MCF 10A (cell line): ENCODE measurements at regions of chr5 and their contacts with region 1.

Region 1: GRCh38 chr5:140351609-140352334 is 5.4 kb upstream of the HBEGF start:
- DNase-seq: peak; percentile 92
- H3K4me3 Mint-ChIP-seq: no peak overlapping the region
- H3K27ac Mint-ChIP-seq: no peak overlapping the region
- H3K4me1 Mint-ChIP-seq: peaks cover 28% of the 10 kb centered on the region
- H3K27me3 Mint-ChIP-seq: no peaks in the 10 kb centered on the region
- CTCF ChIP-seq: peak; percentile 95

Region 2: DNA sequence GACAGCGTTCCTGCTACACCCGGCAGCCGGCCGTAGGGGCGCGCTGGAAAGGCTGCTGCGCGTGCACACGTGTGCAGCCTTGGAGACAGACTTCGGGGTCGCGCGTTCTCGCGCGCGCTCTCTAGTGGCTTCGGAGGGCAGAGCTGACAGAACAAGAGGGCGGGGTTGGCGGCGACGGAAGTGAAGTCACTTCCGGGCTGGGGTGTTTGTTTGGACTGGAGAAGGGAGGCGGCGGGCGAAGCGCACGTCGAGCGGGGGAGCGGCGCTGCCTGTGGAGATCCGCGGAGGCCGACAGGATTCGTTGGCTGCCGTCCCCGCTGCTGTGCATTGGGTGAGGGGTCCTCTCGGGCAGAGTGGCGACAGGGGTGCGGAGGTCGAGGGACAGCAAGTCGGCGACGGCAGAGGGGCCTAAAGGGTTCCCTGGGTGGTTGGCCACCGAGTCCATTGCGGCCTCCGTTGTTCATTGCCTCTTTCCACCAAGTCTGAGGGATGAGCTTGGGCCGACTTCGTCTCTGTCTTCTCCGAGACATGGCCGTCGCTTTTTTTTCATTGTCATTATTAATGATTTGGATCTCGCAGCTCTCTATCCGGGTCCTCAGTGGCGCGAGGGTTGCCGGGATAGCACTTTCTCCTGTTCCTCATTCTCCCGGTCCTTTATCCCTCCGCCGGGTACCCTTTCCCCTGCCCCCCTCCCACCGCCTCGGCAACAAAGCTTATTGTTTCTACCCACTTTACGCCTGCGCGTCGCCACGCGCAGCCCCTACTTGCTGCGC is 1009.9 kb before region 1 on chr5 and contains the start of gene PAIP2:
- CTCF ChIA-PET with region 1: no interaction called
- POLR2A ChIA-PET with region 1: no interaction called
- intact Hi-C with region 1: no loop called
- DNase-seq: peak; percentile 99
- H3K4me3 Mint-ChIP-seq: peak within 1 kb of the TSS; percentile 97
- H3K27ac Mint-ChIP-seq: peak within 1 kb of the TSS; percentile 100
- H3K4me1 Mint-ChIP-seq: peaks cover 20% of the 10 kb centered on the region
- H3K27me3 Mint-ChIP-seq: no peaks in the 10 kb centered on the region
- CTCF ChIP-seq: peak; percentile 85
- total RNA-seq, gene PAIP2: 104 and 108 TPM in 2 replicates

Region 3: DNA sequence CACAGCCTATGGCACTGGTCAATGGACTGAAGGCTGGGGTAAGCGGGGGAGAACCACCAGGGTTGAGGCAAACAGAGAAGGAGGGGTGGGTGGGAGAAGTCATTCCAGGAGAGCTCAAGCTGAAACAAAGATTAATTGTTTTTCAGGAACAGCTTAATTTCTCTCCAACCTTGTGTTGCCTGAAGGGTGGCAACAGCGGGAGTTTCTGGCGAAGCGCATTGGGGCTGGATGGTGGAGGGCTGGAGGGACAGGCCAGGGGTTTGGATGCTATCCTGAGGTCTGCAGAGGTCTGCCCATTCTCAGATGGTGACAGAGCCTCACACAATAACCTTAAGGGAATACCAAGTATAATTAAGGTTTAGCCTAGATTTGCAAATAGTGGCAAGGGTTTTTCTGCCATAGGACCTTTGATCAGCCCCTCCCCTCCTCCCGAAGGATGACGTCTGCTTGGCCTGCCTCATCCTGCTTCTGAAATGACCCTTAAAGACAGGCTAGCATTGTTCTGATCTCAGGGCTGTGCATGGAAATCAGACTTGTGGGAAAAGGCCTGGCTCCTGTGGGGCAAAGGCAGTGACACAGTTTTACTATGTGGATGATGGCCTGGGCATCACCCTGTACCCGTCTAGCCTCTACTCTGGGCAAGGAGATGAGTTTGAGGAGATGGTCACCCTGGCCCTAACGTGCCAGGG is 523.4 kb before region 1 on chr5:
- CTCF ChIA-PET with region 1: no interaction called
- POLR2A ChIA-PET with region 1: no interaction called
- intact Hi-C with region 1: no loop called
- DNase-seq: no peak
- H3K4me3 Mint-ChIP-seq: no peak overlapping the region
- H3K27ac Mint-ChIP-seq: no peak overlapping the region
- H3K4me1 Mint-ChIP-seq: no peaks in the 10 kb centered on the region
- H3K27me3 Mint-ChIP-seq: peaks cover 86% of the 10 kb centered on the region
- CTCF ChIP-seq: no peak

Region 4: DNA sequence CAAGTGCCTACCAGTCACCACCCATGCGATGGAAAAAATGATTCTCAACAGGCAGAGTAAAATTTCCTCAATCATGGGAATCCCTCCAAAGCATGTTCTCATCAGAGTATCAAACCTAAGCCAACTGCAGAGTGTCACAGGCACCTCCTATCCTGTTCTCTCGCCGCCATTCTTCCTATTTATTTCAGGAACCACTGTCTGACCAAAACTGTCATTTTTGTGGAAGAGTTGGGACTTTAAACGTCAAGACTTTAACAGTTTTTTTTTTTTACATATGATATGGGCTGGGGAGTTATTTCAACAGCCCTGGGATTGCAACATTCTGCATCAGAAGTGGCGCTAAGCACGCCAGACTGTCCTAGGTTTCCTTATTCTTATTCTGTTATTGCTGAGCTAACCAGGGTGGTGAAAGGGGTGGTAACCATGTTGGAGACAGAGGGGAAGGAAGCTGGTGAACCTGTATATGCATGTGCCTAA is 78.3 kb before region 1 on chr5:
- CTCF ChIA-PET with region 1: interaction called, 1,450 read pairs
- POLR2A ChIA-PET with region 1: interaction called, 5 read pairs
- intact Hi-C with region 1: no loop called
- DNase-seq: peak; percentile 55
- H3K4me3 Mint-ChIP-seq: no peak overlapping the region
- H3K27ac Mint-ChIP-seq: no peak overlapping the region
- H3K4me1 Mint-ChIP-seq: no peaks in the 10 kb centered on the region
- H3K27me3 Mint-ChIP-seq: no peaks in the 10 kb centered on the region
- CTCF ChIP-seq: no peak

Region 5: DNA sequence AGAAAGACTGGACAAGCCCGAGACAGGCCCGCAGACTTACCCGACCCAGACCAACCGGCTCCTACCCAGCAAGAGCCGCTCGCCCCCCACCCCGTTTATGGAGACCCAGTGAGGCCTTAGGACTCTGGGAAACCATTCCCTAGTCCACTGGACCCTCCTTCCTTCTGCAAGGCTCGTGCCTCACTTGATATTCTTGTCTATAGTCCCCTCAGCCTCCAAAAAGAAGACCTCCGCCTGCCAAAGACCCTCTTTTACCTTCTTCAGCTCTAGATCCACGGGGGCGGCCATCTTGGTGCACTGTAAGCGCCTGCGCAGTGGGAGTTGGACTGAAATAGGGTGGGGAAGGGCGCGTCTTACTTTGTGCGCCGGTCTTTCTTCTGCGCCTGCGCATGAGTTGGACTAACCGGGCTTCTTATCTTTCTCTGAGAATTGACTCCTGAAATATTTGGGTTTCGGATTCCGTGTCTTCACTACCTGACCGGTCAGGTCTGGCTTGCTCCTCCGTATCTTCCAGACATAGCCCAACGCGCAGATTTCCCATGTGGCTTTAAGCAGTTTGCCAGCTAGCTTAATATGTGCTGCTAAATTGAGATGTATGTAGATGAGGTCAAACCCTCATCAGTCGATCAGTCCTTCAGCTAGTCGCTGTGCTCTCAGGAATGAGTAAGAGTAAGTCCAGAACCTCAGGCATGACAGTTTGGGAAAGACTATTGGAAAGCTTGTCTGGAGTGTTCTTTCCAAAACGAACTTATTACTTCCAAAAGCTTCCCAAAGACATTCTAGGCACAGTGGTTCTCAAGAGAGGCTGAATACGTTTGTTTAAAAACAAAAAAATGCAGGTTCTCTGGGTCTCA is 48.8 kb before region 1 on chr5 and contains the start of gene PFDN1:
- CTCF ChIA-PET with region 1: interaction called, 52 read pairs
- POLR2A ChIA-PET with region 1: interaction called, 98 read pairs
- intact Hi-C with region 1: loop called (anchors 2 kb)
- DNase-seq: peak; percentile 99
- H3K4me3 Mint-ChIP-seq: peak within 1 kb of the TSS; percentile 100
- H3K27ac Mint-ChIP-seq: peak within 1 kb of the TSS; percentile 100
- H3K4me1 Mint-ChIP-seq: peaks cover 30% of the 10 kb centered on the region
- H3K27me3 Mint-ChIP-seq: no peaks in the 10 kb centered on the region
- CTCF ChIP-seq: no peak
- total RNA-seq, gene PFDN1: 94.7 and 102 TPM in 2 replicates

Region 6: DNA sequence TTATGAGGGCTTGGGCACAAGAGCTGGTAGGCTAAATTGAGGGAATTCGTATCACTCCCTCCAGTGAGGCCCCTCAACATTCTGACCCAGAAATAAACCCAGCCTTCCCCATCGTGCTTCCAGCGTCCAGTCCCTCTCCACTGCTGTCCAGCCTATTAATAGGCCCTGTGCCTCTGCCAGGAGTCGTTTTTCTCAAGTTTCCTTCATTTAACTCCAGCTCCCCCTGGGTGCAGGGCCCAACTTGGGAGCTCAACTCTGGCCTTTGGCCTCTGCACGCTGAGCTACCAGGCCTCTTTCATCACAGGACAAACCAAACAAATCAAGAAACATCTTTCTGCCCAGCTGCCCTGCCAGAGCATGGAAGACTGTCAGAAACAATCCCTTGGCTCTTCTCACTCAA is 15.4 kb before region 1 on chr5:
- CTCF ChIA-PET with region 1: interaction called, 37 read pairs
- POLR2A ChIA-PET with region 1: interaction called, 18 read pairs
- intact Hi-C with region 1: no loop called
- DNase-seq: no peak
- H3K4me3 Mint-ChIP-seq: no peak overlapping the region
- H3K27ac Mint-ChIP-seq: no peak overlapping the region
- H3K4me1 Mint-ChIP-seq: peaks cover 16% of the 10 kb centered on the region
- H3K27me3 Mint-ChIP-seq: no peaks in the 10 kb centered on the region
- CTCF ChIP-seq: no peak

Region 7: DNA sequence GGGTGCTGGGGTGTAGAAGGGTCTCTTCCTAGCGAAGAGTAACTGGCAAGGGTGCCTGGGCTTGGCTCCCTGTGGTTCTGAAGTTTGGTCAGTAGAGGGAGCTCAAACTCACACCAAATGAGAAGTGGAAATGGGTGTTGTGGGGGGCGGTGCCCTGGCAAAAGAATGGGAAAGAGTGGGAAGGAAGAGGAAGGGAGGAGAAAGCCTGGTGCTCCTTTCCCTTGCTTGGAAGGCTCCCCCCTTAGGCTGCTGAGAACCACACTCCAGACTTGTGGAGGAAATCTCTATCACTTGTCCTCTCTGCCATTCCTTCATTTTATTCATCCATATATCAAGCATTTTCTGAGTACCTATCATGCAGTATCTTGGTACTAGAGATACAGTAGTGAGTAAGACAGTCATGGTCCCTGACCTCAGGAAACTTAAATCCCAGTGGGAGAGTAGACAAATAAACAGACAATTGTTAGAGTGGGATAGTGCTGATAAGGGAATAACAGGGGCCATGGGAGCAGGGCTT is 21.3 kb after region 1 on chr5:
- CTCF ChIA-PET with region 1: interaction called, 25 read pairs
- POLR2A ChIA-PET with region 1: interaction called, 3 read pairs
- intact Hi-C with region 1: no loop called
- DNase-seq: peak; percentile 90
- H3K4me3 Mint-ChIP-seq: no peak overlapping the region
- H3K27ac Mint-ChIP-seq: no peak overlapping the region
- H3K4me1 Mint-ChIP-seq: peaks cover 8% of the 10 kb centered on the region
- H3K27me3 Mint-ChIP-seq: no peaks in the 10 kb centered on the region
- CTCF ChIP-seq: peak; percentile 97

Region 8: DNA sequence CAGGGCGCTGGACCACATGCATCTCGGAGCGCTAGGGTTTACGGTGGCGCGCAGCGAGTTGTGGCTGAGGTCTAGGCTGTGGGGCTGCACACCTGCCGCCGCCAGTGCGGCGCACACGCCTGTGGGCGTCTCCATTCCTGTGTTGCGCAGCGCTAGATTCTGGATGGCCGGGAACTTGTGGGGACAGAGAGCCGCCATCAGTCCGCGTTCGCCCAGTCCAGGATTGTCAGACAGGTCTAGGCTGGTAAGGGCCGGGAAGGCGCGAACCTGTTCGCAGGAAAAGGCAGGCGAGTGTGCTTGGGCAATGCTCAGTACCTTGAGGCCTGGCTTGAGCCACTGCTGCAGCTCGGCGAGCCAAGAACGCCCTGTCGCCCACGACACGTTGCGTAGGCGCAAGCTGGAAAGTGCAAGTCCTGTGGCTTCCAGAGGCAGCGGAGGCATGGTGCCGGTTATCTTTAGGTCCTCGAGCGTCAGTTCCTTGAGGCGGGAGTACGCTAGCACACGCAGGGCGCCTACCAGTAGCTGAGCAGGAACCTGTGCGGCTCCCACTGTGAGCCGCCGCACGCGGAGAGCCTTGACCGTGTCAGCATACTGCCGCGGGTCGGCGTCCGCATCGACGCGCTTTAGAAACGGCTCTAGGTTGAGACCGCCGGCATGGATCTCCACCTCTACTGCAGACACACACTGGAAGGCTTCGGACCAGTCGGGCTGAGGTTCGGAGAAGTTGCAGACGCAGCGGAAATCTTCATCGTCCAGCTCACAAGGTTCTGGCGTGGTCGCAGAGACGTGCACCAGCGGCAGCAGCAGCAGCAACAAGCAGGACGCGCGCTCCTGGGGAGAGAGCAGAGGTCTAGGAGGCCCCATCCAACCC is 280.6 kb after region 1 on chr5:
- CTCF ChIA-PET with region 1: no interaction called
- POLR2A ChIA-PET with region 1: no interaction called
- intact Hi-C with region 1: no loop called
- DNase-seq: peak; percentile 85
- H3K4me3 Mint-ChIP-seq: peak overlapping the region; percentile 68
- H3K27ac Mint-ChIP-seq: no peak overlapping the region
- H3K4me1 Mint-ChIP-seq: peaks cover 30% of the 10 kb centered on the region
- H3K27me3 Mint-ChIP-seq: no peaks in the 10 kb centered on the region
- CTCF ChIP-seq: no peak